Gastrocnemius medialis (tissue), 4 donors: ENCODE measurements at regions of chr2 and their contacts with region 1.

Region 1: GRCh38 chr2:121095257-121096080 is 189.5 kb downstream of the TFCP2L1 start:
- DNase-seq: peak; percentile 37 to 41
- ATAC-seq: peak; percentile 58 to 75
- H3K4me3 ChIP-seq: no peak overlapping the region
- H3K27ac ChIP-seq: no peak overlapping the region
- H3K4me1 ChIP-seq: no peaks in the 10 kb centered on the region
- H3K27me3 ChIP-seq: no peaks in the 10 kb centered on the region
- CTCF ChIP-seq: peak; percentile 55 to 65 (median 63)
- POLR2A ChIP-seq: no peak

Region 2: DNA sequence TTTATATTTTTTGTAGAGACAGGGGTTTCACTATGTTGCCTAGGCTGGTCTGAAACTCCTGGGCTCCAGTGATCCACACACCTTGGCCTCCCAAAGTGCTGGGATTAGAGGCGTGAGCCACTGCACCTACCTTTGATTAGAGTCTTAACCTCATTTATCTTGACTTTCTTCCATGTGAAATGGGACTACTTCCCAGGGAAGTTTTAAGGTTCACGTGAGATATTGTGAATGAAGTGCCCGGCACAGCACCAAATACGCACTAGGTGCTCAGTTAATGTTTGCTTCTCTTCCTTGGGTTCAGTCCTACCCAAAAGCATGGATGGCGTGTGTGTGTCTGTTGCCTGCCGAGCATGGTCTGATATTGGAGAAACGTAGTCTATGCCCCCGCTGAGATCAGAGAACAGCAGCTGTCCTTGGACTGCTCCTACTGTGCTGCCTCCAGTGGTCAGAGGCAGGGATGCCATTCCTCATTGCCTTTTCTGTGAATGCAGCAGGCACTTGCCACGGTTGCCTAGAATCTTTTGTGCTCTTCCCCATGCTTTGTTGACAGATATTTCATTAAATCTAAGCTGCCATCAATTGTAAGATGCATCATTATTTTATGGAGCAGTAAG is 201.9 kb after region 1 on chr2:
- in situ Hi-C with region 1: loop called in 1 of 4 experiments (anchors 25 kb)
- intact Hi-C with region 1: loop called (anchors 5 kb)
- DNase-seq: no peak
- ATAC-seq: peak; percentile 36 to 82
- H3K4me3 ChIP-seq: no peak overlapping the region
- H3K27ac ChIP-seq: no peak overlapping the region
- H3K4me1 ChIP-seq: no peaks in the 10 kb centered on the region
- H3K27me3 ChIP-seq: peaks cover 0 to 2% (median 0%) of the 10 kb centered on the region in 3 donors
- CTCF ChIP-seq: peak in 4 of 5 experiments; percentile 28 to 59 (median 44)
- POLR2A ChIP-seq: no peak

Region 3: GRCh38 chr2:121309801-121310200 is 214.3 kb after region 1 on chr2:
- in situ Hi-C with region 1: loop called in 1 of 4 experiments (anchors 25 kb)
- intact Hi-C with region 1: no loop called
- DNase-seq: no peak
- ATAC-seq: no peak
- H3K4me3 ChIP-seq: no peak overlapping the region
- H3K27ac ChIP-seq: no peak overlapping the region
- H3K4me1 ChIP-seq: no peaks in the 10 kb centered on the region
- H3K27me3 ChIP-seq: no peaks in the 10 kb centered on the region
- CTCF ChIP-seq: no peak
- POLR2A ChIP-seq: no peak

Region 4: DNA sequence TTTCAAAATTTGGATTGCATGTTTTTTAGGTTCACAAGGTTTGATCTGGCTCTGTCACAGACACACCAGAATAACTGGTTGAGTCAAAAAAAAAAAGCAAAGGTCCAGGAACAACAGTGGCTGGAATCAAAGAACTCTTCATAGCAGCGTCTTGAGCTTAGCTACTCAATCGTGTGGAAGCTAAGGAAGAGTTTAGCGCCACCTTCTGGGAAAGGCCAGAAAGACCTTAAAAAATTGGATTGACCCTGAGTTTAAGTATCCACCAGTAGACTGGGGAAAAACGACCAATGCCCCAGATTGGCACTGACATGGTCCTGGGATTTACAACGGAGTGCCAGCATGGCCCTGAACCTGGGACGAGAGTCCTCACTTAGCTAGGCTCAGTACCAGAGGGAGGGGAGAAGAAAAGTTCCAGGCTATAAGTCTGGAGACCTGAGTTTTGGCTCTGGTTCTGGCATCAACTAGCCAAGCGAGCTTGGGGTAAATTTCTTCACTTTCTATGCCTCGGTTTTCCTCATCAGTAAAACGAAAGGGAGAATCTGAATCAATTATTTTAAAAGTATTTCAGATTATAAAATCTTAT is 260.7 kb after region 1 on chr2:
- in situ Hi-C with region 1: loop called in 3 of 4 experiments (anchors 10 to 25 kb)
- intact Hi-C with region 1: loop called (anchors 1 kb)
- DNase-seq: no peak
- ATAC-seq: peak; percentile 35 to 62
- H3K4me3 ChIP-seq: no peak overlapping the region
- H3K27ac ChIP-seq: peak overlapping the region; percentile 14 to 55 (median 50)
- H3K4me1 ChIP-seq: peaks cover 26 to 34% of the 10 kb centered on the region in 2 donors
- H3K27me3 ChIP-seq: no peaks in the 10 kb centered on the region
- CTCF ChIP-seq: peak; percentile 41 to 75 (median 61)
- POLR2A ChIP-seq: no peak